Lower lobe of right lung (tissue), 2 donors: ENCODE measurements at regions of chr20 and their contacts with region 1.

Region 1: DNA sequence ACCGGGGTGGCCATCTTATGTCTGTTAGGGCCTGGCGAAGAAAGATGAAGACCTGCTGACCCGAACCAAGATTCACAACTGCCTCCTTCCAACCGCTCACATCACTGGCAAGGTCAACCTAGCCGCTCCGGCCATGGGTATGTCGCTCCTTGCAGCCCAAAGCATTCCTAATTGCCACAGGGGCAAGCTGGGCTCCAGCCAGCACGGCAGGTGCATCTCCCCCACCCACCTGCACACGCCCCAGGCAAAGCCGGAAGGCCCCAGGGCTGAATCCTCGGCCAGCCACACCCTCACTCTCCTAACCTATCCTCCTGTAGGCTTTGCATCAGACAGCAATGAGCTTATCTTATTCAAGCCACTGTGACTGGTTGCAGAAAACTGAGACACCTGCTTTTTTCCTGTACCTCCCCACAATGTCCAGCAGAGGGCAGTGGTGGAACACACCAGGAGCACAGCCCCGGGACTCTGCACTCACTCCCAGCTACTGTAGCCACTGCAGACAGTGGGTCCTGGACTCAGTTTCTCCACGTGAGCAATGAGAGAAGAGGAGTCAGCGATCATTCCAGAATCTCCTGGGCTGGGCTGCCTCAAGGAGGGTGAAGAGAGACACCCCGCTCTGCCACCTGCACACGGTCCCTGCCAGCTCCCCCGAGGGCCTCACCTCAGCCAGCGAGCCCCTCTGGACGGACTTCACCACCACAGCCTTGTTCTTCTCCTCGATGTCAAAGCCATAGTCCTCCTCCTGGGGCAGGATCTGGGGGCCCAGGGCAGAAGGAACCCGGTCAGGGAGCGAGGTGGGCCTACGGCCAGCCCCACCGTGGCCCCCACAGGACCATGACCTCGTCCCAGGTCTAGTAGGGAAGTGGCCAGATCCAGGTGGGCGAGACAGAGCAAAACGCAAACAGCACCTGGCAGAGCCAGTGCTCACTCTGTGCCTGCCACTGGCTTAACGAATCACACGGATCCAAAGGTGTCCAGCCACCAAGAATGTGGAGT is 170.0 kb downstream of the PREX1 start:
- DNase-seq: peak; percentile 67
- ATAC-seq: peak; percentile 85 to 89
- H3K4me3 ChIP-seq: no peak overlapping the region
- H3K27ac ChIP-seq: no peak overlapping the region
- H3K4me1 ChIP-seq: peaks cover 6% of the 10 kb centered on the region
- H3K27me3 ChIP-seq: no peaks in the 10 kb centered on the region
- CTCF ChIP-seq: peak; percentile 93

Region 2: DNA sequence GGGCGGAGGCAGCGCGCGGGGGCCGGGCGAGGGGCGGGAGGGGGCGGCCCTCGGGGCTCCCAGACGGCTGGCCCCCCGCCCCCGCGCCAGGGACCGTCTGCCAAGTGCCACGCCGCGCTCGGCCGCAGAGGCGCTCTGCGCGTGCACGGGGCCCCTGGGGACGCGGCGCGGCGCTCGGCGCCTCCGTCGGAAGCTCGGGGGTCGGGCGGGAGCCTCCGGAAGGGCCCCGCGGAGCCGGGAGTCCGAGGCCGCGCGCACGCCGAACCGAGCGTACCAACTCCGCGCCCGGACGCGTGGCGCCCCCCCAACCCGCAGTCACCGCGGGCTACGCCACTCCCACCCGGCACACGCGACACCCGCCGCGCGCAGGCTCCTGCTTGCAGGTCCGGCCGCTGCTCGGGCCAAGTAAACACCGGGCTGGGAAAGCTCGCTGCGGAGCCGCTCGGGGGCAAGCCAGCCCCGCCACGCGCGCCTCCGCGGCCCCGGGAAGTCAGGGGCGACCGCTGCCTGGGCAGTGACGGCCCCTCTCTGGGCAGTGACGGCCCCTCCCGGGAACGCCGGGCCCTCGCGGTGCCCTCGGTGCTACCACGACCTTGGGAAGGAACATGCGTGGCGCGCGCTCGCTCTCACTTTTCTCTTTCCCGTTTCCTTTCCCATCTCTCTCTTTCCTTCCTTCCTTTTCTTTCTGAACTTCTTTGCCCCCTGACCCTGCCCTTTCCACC is 170.4 kb after region 1 on chr20:
- intact Hi-C with region 1: no loop called
- DNase-seq: peak; percentile 88
- ATAC-seq: peak; percentile 75 to 90
- H3K4me3 ChIP-seq: peak overlapping the region; percentile 69
- H3K27ac ChIP-seq: peak overlapping the region; percentile 79
- H3K4me1 ChIP-seq: peaks cover 59% of the 10 kb centered on the region
- H3K27me3 ChIP-seq: peaks cover 15% of the 10 kb centered on the region
- CTCF ChIP-seq: peak; percentile 11

Region 3: GRCh38 chr20:48853591-48854443 is 196.0 kb after region 1 on chr20:
- intact Hi-C with region 1: no loop called
- DNase-seq: no peak
- ATAC-seq: no peak
- H3K4me3 ChIP-seq: no peak overlapping the region
- H3K27ac ChIP-seq: no peak overlapping the region
- H3K4me1 ChIP-seq: peaks cover 3% of the 10 kb centered on the region
- H3K27me3 ChIP-seq: peaks cover 20% of the 10 kb centered on the region
- CTCF ChIP-seq: no peak

Region 4: DNA sequence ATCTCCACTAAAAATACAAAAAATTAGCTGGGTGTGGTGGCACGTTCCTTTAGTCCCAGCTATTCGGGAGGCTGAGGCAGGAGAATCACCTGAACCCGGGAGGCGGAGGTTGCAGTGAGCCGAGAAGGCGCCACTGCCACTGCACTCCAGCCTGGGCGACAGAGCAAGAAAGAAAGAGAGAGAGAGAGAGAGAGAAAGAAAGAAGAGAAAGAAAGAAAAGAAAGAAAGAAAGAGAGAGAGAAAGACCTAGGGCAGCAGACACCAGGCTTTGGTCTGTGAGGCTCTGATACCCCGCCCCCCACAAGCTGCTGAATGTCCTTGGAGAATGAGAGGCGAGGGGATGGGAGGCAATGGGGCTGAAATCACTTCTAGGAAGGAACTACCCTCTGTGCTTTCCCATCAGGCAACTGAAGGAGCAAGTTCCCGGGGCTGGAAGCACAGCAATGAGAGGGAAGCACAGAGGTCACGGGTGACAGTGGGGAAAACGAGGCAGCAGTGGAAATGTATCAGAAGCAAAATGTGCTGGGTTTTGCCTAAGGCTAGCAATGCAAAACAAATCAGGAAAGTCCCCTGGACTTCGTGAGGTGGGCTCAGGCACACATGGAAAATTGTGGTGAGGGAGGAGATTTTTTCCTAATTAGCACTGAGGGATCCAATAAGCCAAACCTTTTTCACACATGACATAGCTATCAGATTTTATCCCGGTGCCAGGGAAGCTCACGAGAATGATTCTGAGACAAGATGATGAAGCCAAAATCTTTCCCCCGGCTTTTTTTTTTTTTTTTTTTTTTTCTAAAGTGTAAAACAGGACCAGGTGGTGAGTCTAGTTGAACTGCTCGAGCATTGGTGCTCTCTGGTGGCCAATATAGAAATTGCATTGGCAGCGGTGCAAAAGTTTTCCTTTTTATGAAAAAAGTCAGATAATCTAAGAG is 246.9 kb after region 1 on chr20:
- intact Hi-C with region 1: loop called (anchors 5 kb)
- DNase-seq: no peak
- ATAC-seq: peak; percentile 59 to 69
- H3K4me3 ChIP-seq: no peak overlapping the region
- H3K27ac ChIP-seq: no peak overlapping the region
- H3K4me1 ChIP-seq: peaks cover 7% of the 10 kb centered on the region
- H3K27me3 ChIP-seq: peaks cover 6% of the 10 kb centered on the region
- CTCF ChIP-seq: peak; percentile 83